ENCODE measurements at regions of chr2 and their contacts with region 1.

Region 1: DNA sequence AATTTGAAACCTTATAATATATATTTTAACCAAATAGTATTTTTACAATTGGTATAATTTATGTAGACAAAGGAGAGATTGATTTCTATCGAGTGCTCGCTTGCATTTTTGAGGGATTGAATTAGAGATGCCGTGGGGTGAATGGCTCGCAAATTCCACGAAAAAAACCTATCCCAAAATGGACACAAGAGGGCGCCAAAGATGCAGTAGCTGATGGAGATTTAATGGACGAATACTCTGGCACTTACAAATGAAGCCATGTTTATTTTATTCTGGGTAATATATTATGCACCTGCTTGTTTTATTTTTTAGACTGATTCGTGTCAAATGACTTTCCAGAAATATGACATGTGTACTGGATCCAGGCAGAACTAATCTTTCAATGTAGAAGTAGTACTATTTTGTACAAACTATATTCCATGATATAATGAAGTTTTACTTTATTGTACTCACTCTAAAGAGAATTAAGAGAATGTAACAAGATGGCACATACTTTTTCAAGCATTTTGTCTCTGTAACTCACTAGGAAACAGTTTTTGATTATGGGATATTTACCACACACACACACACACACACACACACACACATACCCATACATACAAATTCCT is 505.4 kb downstream of the PLCL1 start:
- DNase-seq: peak; percentile 61
- H3K4me3 ChIP-seq: no peak overlapping the region
- H3K27ac ChIP-seq: no peak overlapping the region
- H3K4me1 ChIP-seq: no peaks in the 10 kb centered on the region
- H3K27me3 ChIP-seq: peaks cover 14 to 27% of the 10 kb centered on the region in 2 experiments
- CTCF ChIP-seq: peak; percentile 71
- POLR2A ChIP-seq: no peak

Region 2: DNA sequence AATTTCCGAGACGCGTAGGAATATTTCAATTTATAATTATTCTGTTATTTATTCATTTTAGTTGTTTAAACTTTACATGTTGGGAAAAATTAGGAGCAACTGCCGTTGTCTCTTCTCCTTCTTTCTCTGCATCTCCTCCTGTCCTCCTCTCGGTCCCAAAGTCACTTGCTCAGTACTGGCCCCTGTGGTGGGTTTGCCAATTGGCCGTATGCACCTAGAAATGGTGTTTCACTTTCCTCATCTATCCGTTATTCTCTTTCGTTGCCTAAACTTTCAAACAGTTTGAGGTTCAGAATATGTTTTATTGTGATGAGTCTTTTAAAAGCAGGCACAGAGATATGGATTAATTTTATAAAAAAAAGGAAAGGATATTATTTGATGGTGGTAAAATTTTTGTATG is 12.5 kb after region 1 on chr2:
- CTCF ChIA-PET with region 1: interaction called, 23 read pairs
- POLR2A ChIA-PET with region 1: no interaction called
- dilution Hi-C with region 1: no loop called
- intact Hi-C with region 1: no loop called
- DNase-seq: no peak
- H3K4me3 ChIP-seq: no peak overlapping the region
- H3K27ac ChIP-seq: no peak overlapping the region
- H3K4me1 ChIP-seq: no peaks in the 10 kb centered on the region
- H3K27me3 ChIP-seq: no peaks in the 10 kb centered on the region
- CTCF ChIP-seq: peak in 1 of 2 donors; percentile 24
- POLR2A ChIP-seq: no peak

Region 3: DNA sequence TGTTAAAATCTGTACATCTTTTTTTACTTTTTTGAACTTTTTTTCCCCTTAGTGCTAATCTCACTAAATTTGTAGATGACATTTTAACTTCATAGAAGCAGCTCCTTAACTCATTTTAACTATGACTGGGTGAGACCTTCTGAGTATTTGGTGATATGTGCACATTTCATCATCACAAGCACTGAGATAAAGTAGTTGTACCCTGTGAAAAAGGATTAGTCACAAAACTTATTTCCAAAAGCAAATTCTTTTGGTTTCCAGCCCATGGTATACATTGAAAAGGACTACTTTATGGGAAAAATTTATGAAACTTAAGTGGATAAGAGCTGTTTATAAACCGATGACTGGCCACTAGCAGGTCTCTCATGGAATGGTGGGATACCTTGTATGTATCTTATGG is 76.1 kb after region 1 on chr2:
- CTCF ChIA-PET with region 1: no interaction called
- POLR2A ChIA-PET with region 1: no interaction called
- dilution Hi-C with region 1: no loop called
- intact Hi-C with region 1: no loop called
- DNase-seq: no peak
- H3K4me3 ChIP-seq: no peak overlapping the region
- H3K27ac ChIP-seq: no peak overlapping the region
- H3K4me1 ChIP-seq: no peaks in the 10 kb centered on the region
- H3K27me3 ChIP-seq: no peaks in the 10 kb centered on the region
- CTCF ChIP-seq: no peak
- POLR2A ChIP-seq: no peak

Region 4: DNA sequence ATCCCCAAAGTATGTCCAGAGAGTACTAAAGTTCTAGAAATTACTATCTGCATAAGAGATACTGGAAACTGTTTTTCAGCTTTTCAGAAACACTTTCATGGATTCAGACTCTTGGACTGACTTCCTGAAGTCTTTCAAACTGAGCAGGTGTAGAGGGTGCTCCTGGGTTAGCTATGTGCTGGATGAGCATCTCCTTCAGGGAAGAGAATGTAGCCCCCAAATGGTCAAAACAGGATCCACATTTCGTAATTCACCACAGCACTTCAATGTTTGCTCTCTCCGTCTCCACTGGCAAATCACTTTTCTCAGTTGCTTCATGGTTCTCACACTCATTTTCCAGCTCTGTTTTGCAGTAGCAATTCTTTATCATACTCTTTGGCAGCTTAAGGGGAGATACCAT is 1171.2 kb after region 1 on chr2:
- CTCF ChIA-PET with region 1: interaction called, 317 read pairs
- POLR2A ChIA-PET with region 1: no interaction called
- dilution Hi-C with region 1: no loop called
- intact Hi-C with region 1: loop called (anchors 1 kb)
- DNase-seq: no peak
- H3K4me3 ChIP-seq: no peak overlapping the region
- H3K27ac ChIP-seq: no peak overlapping the region
- H3K4me1 ChIP-seq: no peaks in the 10 kb centered on the region
- H3K27me3 ChIP-seq: peaks cover 0 to 6% of the 10 kb centered on the region in 2 experiments
- CTCF ChIP-seq: no peak
- POLR2A ChIP-seq: no peak

Region 5: DNA sequence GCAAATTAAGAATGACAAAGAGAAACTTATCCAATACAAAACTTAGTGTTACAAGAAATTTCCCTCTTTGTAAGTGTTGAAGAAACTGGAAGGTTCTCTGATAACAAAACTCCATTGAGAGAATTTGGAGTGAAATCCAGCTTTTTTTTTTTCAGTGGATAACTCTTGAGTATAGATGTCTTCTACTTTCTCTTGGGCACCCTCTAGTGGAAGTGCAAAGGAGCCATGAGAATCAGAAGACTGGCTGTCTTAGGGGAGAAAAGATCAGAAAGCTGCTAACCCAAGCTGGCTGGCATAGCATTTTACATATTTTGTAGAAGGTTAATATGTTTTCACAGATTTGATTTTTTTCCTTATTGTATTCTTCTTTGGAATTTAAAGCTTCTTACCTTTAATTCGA is 1286.8 kb after region 1 on chr2:
- CTCF ChIA-PET with region 1: interaction called, 13 read pairs
- POLR2A ChIA-PET with region 1: no interaction called
- dilution Hi-C with region 1: no loop called
- intact Hi-C with region 1: loop called (anchors 10 kb)
- DNase-seq: no peak
- H3K4me3 ChIP-seq: no peak overlapping the region
- H3K27ac ChIP-seq: no peak overlapping the region
- H3K4me1 ChIP-seq: no peaks in the 10 kb centered on the region
- H3K27me3 ChIP-seq: no peaks in the 10 kb centered on the region
- CTCF ChIP-seq: peak in 1 of 2 donors; percentile 28
- POLR2A ChIP-seq: no peak

Region 6: GRCh38 chr2:199739413-199740110 is 1429.8 kb after region 1 on chr2:
- CTCF ChIA-PET with region 1: interaction called, 120 read pairs
- POLR2A ChIA-PET with region 1: no interaction called
- dilution Hi-C with region 1: no loop called
- intact Hi-C with region 1: loop called (anchors 1 kb)
- DNase-seq: peak; percentile 51
- H3K4me3 ChIP-seq: no peak overlapping the region
- H3K27ac ChIP-seq: no peak overlapping the region
- H3K4me1 ChIP-seq: no peaks in the 10 kb centered on the region
- H3K27me3 ChIP-seq: peaks cover 5 to 7% of the 10 kb centered on the region in 2 experiments
- CTCF ChIP-seq: peak; percentile 80 to 83
- POLR2A ChIP-seq: no peak

Measured in endothelial cell of umbilical vein (primary cell).